Activated T-helper 2 cell treated with anti-CD3 and anti-CD28 coated beads, Interferon-gamma antibody, Interleukin-2, Interleukin-4, amounts not matched to agents 10 μg/mL and 5 μg/mL and 100 μg/mL, durations not matched to agents 14 hours and 24 hours and 36 hours (primary cell): ENCODE measurements at regions of chr3 and their contacts with region 1.

Region 1: DNA sequence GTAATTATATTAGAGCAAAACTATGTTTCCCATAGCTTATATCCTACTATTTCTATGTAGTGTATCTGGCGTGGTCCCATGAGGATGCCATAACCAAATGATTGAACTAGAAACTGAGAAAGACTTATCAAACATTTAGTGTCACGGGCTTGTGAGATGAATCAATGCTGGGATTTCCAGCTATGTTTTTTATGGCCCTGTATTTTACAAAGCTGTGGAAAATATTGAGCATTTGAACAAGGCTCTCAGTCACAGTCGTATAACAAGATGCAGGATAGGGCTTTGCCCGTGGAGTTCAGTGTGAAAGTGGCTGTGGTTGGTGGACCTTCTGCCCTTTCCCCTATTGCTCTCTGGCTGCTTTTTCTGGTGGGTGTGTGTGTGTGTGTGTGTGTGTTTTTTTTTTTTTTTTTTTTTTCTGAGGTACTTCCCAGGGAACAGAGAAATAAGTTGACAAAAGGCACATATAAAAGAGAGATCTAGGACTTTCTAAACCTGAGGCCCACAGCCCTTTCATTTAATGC is 60.7 kb downstream of the CACNA1D start:
- DNase-seq: no peak
- H3K4me3 Mint-ChIP-seq: no peak overlapping the region
- H3K27ac Mint-ChIP-seq: peak overlapping the region; percentile 94
- H3K4me1 Mint-ChIP-seq: peaks cover 38% of the 10 kb centered on the region
- H3K27me3 Mint-ChIP-seq: peaks cover 14% of the 10 kb centered on the region

Region 2: GRCh38 chr3:53269888-53270880 is 284.9 kb before region 1 on chr3:
- intact Hi-C with region 1: no loop called
- DNase-seq: no peak
- H3K4me3 Mint-ChIP-seq: no peak overlapping the region
- H3K27ac Mint-ChIP-seq: peak overlapping the region; percentile 59
- H3K4me1 Mint-ChIP-seq: peaks cover 14% of the 10 kb centered on the region
- H3K27me3 Mint-ChIP-seq: peaks cover under 1% of the 10 kb centered on the region

Region 3: DNA sequence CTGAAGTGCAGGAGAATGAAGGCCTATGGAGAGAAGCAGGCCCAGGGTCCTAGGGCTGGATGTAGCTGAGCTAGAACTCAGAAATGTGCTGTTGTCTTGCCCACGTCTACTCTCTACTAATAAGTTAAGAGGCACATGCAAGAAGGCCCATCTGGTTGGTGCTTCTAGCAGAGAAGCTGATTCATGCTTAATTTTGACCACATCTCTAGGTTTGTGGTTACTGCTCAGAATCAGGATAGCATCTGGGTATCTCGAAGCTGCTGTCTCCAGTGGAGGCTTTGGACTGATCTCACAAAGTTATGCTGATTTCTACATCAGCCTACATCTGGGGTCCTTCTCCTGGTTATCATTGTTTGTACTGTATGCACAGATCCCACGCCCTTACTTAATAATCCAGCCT is 26.5 kb after region 1 on chr3:
- intact Hi-C with region 1: loop called (anchors 1 kb)
- DNase-seq: no peak
- H3K4me3 Mint-ChIP-seq: no peak overlapping the region
- H3K27ac Mint-ChIP-seq: peak overlapping the region; percentile 5
- H3K4me1 Mint-ChIP-seq: peaks cover 23% of the 10 kb centered on the region
- H3K27me3 Mint-ChIP-seq: peaks cover 26% of the 10 kb centered on the region

Region 4: GRCh38 chr3:53650424-53650823 is 95.3 kb after region 1 on chr3:
- intact Hi-C with region 1: loop called (anchors 2 kb)
- DNase-seq: peak; percentile 18
- H3K4me3 Mint-ChIP-seq: peak overlapping the region; percentile 15
- H3K27ac Mint-ChIP-seq: peak overlapping the region; percentile 56
- H3K4me1 Mint-ChIP-seq: peaks cover 20% of the 10 kb centered on the region
- H3K27me3 Mint-ChIP-seq: peaks cover 12% of the 10 kb centered on the region

Region 5: DNA sequence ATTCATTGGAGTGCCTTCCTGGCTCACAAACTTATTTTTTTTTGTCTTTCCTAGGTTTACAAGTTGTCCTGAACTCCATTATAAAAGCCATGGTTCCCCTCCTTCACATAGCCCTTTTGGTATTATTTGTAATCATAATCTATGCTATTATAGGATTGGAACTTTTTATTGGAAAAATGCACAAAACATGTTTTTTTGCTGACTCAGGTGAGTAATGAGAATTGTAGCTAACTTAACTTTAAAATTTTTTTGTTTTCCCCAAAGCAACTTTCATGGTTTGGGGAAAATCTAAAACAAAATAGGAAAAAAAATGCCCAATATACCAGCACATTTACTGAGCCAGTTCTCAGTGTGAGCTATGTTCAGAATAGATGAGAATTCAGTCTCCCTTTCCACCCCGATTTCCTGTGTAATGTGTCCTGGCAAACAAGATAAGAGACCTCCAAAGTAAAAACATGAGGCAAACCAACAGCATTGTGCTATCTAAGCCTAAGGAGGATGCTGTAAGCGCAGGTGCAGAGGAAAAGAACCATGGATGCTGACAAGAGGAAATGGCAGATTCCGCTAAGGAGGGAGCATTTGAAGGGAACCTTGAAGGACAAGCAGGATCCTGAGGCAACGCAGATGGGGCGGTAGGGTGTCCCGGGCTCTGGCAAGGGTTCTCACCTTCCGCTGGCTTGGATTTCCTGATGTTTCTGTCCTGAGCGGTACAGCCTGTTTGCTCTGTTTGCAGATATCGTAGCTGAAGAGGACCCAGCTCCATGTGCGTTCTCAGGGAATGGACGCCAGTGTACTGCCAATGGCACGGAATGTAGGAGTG is 110.7 kb after region 1 on chr3:
- intact Hi-C with region 1: no loop called
- DNase-seq: no peak
- H3K4me3 Mint-ChIP-seq: no peak overlapping the region
- H3K27ac Mint-ChIP-seq: no peak overlapping the region
- H3K4me1 Mint-ChIP-seq: no peaks in the 10 kb centered on the region
- H3K27me3 Mint-ChIP-seq: peaks cover 22% of the 10 kb centered on the region

Region 6: GRCh38 chr3:53715815-53716483 is 160.8 kb after region 1 on chr3:
- intact Hi-C with region 1: loop called (anchors 5 kb)
- DNase-seq: no peak
- H3K4me3 Mint-ChIP-seq: no peak overlapping the region
- H3K27ac Mint-ChIP-seq: peak overlapping the region; percentile 74
- H3K4me1 Mint-ChIP-seq: peaks cover 48% of the 10 kb centered on the region
- H3K27me3 Mint-ChIP-seq: peaks cover 3% of the 10 kb centered on the region